ENCODE measurements at regions of chr19 and their contacts with region 1.

Region 1: DNA sequence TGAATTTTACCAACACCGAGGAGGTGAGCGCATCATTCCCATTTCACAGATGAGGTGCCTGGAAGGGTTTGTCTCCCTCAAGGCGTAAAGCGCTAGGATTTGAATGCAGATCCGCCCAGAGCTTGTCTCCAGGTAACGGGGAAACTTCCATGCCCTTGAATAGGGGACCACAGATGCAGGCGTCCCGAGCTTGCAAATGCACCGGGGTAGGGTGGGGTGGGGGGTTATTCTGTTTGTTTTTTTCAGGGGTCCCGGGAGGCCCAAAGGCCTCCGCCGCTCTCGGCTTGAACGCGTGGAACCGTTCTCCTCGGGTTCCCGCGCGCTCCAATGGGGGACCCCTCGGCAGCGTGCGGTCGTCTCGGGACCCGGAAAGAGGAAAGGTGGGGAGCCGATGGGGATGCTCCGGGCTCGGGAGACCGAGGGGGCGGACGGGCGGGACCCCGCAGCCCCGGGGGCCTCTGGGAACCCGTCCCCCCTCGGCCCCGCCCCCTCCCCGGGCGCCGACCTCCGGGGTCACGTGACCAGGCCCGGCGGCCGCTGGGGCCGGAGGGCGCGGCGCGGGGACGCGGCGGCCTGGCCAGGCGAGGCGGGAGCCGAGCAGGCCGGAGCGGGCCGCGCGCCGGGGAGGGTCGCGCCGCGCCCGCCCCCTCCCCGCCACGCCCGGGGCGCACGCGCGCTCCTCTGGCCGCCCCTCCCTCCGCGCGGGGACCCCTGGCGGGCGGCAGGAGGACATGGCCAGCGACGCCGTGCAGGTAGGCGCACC is at the start of gene PKN1:
- DNase-seq: peak; percentile 47
- H3K4me3 Mint-ChIP-seq: peak within 1 kb of the TSS; percentile 89
- H3K27ac Mint-ChIP-seq: peak within 1 kb of the TSS; percentile 81
- H3K4me1 Mint-ChIP-seq: peaks cover 37% of the 10 kb centered on the region
- H3K27me3 Mint-ChIP-seq: peaks cover 12% of the 10 kb centered on the region
- total RNA-seq, gene PKN1: 151 and 180 TPM in 2 replicates

Region 2: GRCh38 chr19:14472202-14472938 is 39.4 kb after region 1 on chr19:
- intact Hi-C with region 1: loop called (anchors 1 kb)
- DNase-seq: peak; percentile 73
- H3K4me3 Mint-ChIP-seq: peak overlapping the region; percentile 47
- H3K27ac Mint-ChIP-seq: no peak overlapping the region
- H3K4me1 Mint-ChIP-seq: peaks cover 31% of the 10 kb centered on the region
- H3K27me3 Mint-ChIP-seq: peaks cover 17% of the 10 kb centered on the region

Measured in activated T-helper 1 cell treated with anti-CD3 and anti-CD28 coated beads, Interleukin-12 subunit alpha, Interleukin-12 subunit beta, Interleukin-2, Interleukin-4 antibody, amounts not matched to agents 30 ng/mL and 10 ng/mL and 1 ng/mL, durations not matched to agents 14 hours and 24 hours and 36 hours (primary cell).